Adrenal gland (tissue), 19 donors: ENCODE measurements at regions of chr7 and their contacts with region 1.

Region 1: DNA sequence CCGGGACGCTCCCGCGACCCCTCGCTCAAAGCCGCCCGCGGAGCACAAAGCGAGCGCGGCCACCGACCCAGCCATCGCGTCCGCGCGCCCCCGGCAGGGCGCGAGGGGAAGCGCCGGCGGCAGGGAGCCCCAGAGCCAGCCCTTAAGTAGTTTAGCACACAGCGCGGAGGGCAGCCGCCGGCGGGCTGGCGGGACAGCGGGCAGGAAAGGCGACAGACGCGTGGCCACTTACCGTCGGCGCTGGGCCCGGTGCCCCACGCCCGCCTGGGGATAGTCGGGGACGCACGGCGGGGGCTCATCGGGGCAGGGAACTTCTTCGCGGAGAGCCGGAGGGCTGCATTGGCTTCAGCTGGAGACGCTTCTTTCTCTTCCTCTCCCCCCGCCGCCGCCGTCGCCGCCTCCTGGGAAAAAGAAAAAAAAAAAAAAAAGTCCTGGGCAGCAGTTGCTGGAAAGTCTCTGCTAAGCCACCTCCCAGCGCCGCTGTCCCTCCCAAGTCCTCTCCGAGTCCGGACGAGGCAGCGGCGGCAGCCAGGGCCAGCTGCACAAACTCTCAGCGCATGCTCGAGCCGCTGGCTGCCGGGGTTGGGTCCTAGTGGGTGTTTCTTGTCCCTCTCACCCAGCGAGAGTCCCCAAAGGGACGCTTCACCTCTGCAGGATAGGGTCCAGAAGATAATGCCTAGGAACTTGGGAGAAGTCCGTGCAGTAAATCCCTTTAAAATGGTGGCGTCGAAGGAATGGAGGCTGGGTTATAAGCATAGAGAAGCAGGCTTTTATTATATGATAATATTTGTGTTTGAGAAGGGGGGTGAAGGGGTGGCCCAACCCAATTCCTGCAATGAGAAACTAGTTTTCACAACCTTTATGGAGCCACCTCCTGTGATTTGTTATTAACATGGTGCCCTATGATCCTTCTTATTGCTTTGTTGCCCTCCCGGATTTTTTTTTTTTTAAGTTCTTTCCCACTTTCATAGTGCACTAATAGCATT is at the start of gene TSPAN12:
- DNase-seq: peak; percentile 81 to 89 (median 87)
- H3K4me3 ChIP-seq: peak within 1 kb of the TSS; percentile 54 to 79 (median 72)
- H3K27ac ChIP-seq: peak within 1 kb of the TSS in 4 of 5 donors; percentile 73 to 92 (median 81)
- H3K4me1 ChIP-seq: peaks cover 0 to 9% of the 10 kb centered on the region in 2 donors
- H3K27me3 ChIP-seq: no peaks in the 10 kb centered on the region
- CTCF ChIP-seq: peak; percentile 28 to 70 (median 46)
- POLR2A ChIP-seq: peak in 1 of 2 donors; percentile 56
- total RNA-seq, gene TSPAN12: 22.5 to 166 (median 91.1) TPM

Region 2: GRCh38 chr7:120792091-120792860 is 65.6 kb before region 1 on chr7:
- intact Hi-C with region 1: no loop called
- DNase-seq: peak; percentile 71 to 88 (median 80)
- H3K4me3 ChIP-seq: no peak overlapping the region
- H3K27ac ChIP-seq: no peak overlapping the region
- H3K4me1 ChIP-seq: no peaks in the 10 kb centered on the region
- H3K27me3 ChIP-seq: no peaks in the 10 kb centered on the region
- CTCF ChIP-seq: peak; percentile 64 to 86 (median 74)
- POLR2A ChIP-seq: no peak

Region 3: GRCh38 chr7:120805636-120806388 is 52.1 kb before region 1 on chr7:
- intact Hi-C with region 1: loop called in 1 of 2 experiments (anchors 5 kb)
- DNase-seq: peak; percentile 43 to 76 (median 64)
- H3K4me3 ChIP-seq: no peak overlapping the region
- H3K27ac ChIP-seq: no peak overlapping the region
- H3K4me1 ChIP-seq: peaks cover 5 to 14% of the 10 kb centered on the region in 2 donors
- H3K27me3 ChIP-seq: no peaks in the 10 kb centered on the region
- CTCF ChIP-seq: peak; percentile 67 to 90 (median 82)
- POLR2A ChIP-seq: no peak

Region 4: DNA sequence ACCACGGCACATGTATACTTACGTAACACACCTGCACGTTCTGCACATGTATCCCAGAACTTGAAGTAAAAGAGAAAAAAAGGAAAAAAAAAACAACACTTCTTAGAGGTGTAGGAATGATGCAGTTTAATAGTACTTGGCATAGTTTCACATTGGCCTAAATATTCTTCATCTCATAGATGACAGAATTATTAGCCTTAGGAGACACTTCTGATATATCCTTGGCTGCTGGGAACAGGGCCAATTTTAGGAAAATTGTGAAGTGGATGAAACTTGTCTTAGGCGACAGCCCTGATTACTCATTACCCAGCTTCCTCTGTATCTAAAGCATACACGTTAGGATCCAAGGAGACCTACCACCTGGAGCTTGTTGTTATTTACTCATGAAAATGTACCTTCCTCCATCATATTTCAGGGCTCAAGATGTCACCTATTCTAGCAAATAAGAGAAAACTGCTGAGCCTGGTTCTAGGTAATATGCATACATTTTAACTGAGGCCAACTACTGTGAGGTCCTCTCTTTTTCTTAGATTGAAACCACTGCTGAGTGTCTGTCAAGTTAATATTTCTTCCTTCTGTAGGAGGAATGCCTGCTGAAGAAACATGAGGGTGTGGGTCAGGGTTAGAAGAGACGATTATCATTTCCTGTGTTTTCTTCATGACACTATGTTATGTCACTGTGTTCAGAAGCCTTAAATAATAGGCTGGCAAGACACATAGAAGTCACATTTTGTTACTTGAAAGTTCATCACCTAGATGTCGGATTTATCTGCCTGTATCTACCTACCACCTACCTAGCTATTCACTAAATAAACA is 175.0 kb after region 1 on chr7:
- intact Hi-C with region 1: no loop called
- DNase-seq: peak in 4 of 7 donors; percentile 29 to 45 (median 37)
- H3K4me3 ChIP-seq: no peak overlapping the region
- H3K27ac ChIP-seq: peak overlapping the region in 1 of 5 donors; percentile 4
- H3K4me1 ChIP-seq: peaks cover 0 to 12% of the 10 kb centered on the region in 2 donors
- H3K27me3 ChIP-seq: no peaks in the 10 kb centered on the region
- CTCF ChIP-seq: no peak
- POLR2A ChIP-seq: no peak